Right lobe of liver (tissue), 6 donors: ENCODE measurements at regions of chr3 and their contacts with region 1.

Region 1: GRCh38 chr3:40179016-40179415 is 130.5 kb upstream of the EIF1B start:
- DNase-seq: peak; percentile 66 to 73 (median 66)
- ATAC-seq: peak; percentile 76 to 86 (median 82)
- H3K4me3 ChIP-seq: no peak overlapping the region
- H3K27ac ChIP-seq: no peak overlapping the region
- H3K4me1 ChIP-seq: no peaks in the 10 kb centered on the region
- H3K27me3 ChIP-seq: no peaks in the 10 kb centered on the region
- CTCF ChIP-seq: peak; percentile 64 to 78 (median 74)
- POLR2A ChIP-seq: no peak

Region 2: GRCh38 chr3:39724233-39724846 is 454.7 kb before region 1 on chr3:
- intact Hi-C with region 1: loop called in 1 of 2 experiments (anchors 10 kb)
- DNase-seq: no peak
- ATAC-seq: peak; percentile 84 to 90 (median 84)
- H3K4me3 ChIP-seq: no peak overlapping the region
- H3K27ac ChIP-seq: no peak overlapping the region
- H3K4me1 ChIP-seq: no peaks in the 10 kb centered on the region
- H3K27me3 ChIP-seq: no peaks in the 10 kb centered on the region
- CTCF ChIP-seq: peak; percentile 62 to 81 (median 63)
- POLR2A ChIP-seq: no peak

Region 3: GRCh38 chr3:40532252-40532651 is 353.2 kb after region 1 on chr3:
- intact Hi-C with region 1: no loop called
- DNase-seq: no peak
- ATAC-seq: no peak
- H3K4me3 ChIP-seq: no peak overlapping the region
- H3K27ac ChIP-seq: no peak overlapping the region
- H3K4me1 ChIP-seq: no peaks in the 10 kb centered on the region
- H3K27me3 ChIP-seq: no peaks in the 10 kb centered on the region
- CTCF ChIP-seq: no peak
- POLR2A ChIP-seq: no peak